ENCODE measurements at regions of chr11 and their contacts with region 1.

Region 1: DNA sequence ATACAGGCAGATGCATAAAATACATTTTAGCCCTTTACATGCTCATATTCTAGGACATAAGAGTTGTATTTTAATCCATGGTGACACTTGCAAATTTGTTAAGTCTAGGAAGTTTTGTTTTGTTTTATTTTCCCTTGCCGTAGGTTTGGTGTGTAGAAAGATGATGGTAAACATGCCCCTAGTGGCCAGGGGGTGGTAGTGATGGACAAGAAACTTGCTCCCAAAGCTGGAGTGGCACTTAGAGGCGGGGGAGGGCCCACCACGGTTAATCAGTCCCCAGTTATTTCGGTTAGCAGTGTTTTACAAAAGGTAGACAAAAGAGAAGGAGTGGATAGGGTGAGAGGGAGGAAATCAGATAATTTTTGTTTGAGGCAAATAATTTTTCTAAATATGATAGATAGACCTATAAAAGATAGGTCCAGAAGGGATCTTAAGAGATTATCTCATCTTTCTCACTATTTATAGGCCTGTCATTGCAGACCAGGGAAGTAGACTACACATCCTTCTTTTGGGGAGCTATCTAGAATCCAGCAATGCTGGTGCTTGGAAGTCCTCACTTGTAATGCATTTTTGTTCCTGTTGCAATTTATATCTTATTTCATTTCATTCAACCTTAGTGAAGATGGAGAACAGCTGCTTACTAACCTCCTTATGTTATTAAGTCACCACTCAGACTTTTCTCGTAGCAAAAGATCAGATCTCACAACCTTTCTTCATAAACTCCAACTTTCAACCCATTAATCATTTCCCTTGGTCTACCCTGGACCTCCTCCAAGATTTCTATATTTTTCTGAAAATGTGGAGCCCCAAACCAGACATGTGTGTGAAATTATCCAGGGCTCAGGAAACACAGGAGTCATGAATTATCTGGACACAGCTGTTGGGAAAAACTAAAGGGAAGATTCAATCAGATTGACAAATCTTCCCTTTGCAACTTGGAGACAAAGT is 5.9 kb upstream of the BDNF start:
- DNase-seq: no peak
- H3K4me3 ChIP-seq: no peak overlapping the region
- H3K27ac ChIP-seq: no peak overlapping the region
- H3K4me1 ChIP-seq: peaks cover 3 to 7% (median 4%) of the 10 kb centered on the region in 4 donors
- H3K27me3 ChIP-seq: peaks cover 34% of the 10 kb centered on the region
- CTCF ChIP-seq: peak; percentile 50 to 71 (median 61)
- EP300 ChIP-seq: no peak
- POLR2A ChIP-seq: no peak

Region 2: GRCh38 chr11:27464154-27464759 is 241.9 kb before region 1 on chr11:
- in situ Hi-C with region 1: no loop called
- intact Hi-C with region 1: no loop called
- DNase-seq: no peak
- H3K4me3 ChIP-seq: no peak overlapping the region
- H3K27ac ChIP-seq: peak overlapping the region; percentile 41 to 94 (median 78)
- H3K4me1 ChIP-seq: peaks cover 0 to 54% (median 41%) of the 10 kb centered on the region in 4 donors
- H3K27me3 ChIP-seq: no peaks in the 10 kb centered on the region
- CTCF ChIP-seq: no peak
- EP300 ChIP-seq: no peak
- POLR2A ChIP-seq: no peak

Region 3: DNA sequence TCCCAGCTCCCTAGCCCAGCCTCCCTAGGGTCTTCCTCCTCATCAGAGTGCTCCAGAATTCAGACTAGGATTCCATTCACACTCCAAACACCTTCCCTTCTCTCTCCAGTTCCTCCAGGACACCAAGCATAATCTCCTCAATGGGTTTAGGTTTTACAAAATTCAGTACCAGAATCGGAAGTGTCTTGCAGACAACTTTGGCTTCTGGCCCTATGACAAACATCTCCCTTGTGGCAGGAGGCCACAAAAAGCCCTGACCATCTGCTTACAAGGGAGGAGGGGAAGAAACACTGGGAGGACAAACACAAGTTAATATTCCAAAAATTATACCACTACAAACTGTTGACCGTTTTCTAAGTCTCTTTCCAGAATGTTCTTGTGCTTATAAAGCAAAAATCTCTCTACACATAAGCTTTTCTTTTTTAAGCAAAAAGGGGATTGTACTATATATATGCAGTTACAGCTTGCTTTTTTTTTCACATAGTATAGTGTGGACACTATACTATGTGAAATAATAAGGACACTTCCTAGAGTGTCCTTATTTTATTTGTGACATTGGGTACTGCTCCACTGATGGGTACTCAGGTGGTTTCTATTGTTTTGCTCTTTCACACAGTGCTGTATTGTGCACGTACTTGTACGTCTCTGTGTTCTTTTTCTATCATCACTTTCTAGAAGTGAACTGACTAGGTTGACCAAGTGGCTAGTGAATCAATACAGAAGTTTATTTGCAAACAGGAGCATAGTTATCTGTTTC is 84.6 kb before region 1 on chr11:
- in situ Hi-C with region 1: loop called in 1 of 4 experiments (anchors 25 kb)
- intact Hi-C with region 1: no loop called
- DNase-seq: no peak
- H3K4me3 ChIP-seq: no peak overlapping the region
- H3K27ac ChIP-seq: no peak overlapping the region
- H3K4me1 ChIP-seq: no peaks in the 10 kb centered on the region
- H3K27me3 ChIP-seq: no peaks in the 10 kb centered on the region
- CTCF ChIP-seq: no peak
- EP300 ChIP-seq: no peak
- POLR2A ChIP-seq: no peak

Region 4: DNA sequence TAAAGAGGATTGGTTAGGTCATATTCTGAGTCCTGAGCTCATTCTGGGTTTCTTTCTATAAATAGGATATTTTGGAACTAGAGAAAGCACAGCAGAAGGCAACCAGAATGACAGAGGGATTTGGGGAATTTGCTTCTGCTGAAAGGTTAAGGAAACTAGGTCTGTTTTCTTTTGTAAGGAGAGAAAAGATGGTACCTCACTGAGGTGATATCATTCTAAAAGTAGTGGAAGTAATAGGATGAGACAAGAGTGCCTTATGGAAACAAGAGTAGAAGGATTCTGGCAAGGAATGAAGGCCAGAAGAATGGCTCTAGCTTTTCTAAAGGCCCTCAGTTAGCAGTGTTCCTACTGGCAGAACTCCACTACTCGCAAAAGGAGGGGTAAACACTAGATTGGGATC is 20.8 kb after region 1 on chr11:
- in situ Hi-C with region 1: no loop called
- intact Hi-C with region 1: loop called (anchors 1 kb)
- DNase-seq: no peak
- H3K4me3 ChIP-seq: no peak overlapping the region
- H3K27ac ChIP-seq: no peak overlapping the region
- H3K4me1 ChIP-seq: peaks cover 4 to 10% (median 7%) of the 10 kb centered on the region in 4 donors
- H3K27me3 ChIP-seq: peaks cover 40% of the 10 kb centered on the region
- CTCF ChIP-seq: no peak
- EP300 ChIP-seq: no peak
- POLR2A ChIP-seq: no peak

Region 5: DNA sequence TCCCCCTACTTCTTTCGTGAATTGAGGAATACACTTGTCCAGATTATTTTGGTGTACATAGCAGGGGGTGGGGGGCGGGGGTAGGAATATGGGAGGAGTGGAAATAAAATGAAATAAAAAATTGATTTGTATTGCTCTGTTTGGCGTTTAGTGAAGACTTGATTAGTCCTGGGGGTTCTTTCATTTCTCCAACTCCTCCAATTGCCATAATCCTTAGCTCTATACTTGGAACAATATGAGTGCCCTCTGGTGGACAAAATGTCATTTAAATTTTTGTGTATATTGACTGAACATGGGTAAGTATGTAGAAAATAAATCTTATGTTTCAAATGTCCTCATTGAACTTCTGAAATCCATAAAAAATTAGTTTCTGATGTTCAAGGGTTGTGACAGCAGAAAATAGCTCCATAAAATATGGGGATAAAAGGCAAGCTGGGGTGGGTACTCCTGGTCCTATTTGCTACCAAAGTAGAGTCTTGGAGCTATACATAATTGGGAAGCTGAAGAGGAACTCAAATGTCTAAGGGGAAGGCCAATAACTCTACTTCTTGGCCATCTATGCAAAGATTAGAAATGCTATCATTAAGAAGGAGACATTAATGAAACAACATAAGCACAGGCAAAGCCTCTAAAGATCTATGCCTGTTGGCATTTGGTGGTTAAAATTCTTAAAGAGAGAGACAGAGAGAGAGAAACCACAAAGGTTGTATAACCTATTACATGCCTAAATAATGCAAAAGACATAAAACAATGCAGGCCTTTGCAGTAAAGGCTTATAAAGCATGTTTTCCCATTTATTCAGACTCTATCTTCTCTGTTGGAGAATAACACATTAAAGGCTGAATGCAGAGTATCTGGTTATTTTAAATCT is 823.6 kb after region 1 on chr11:
- in situ Hi-C with region 1: loop called in 2 of 4 experiments (anchors 25 kb)
- intact Hi-C with region 1: no loop called
- DNase-seq: no peak
- H3K4me3 ChIP-seq: no peak overlapping the region
- H3K27ac ChIP-seq: no peak overlapping the region
- H3K4me1 ChIP-seq: no peaks in the 10 kb centered on the region
- H3K27me3 ChIP-seq: no peaks in the 10 kb centered on the region
- CTCF ChIP-seq: peak; percentile 20 to 44 (median 39)
- EP300 ChIP-seq: no peak
- POLR2A ChIP-seq: no peak

Region 6: DNA sequence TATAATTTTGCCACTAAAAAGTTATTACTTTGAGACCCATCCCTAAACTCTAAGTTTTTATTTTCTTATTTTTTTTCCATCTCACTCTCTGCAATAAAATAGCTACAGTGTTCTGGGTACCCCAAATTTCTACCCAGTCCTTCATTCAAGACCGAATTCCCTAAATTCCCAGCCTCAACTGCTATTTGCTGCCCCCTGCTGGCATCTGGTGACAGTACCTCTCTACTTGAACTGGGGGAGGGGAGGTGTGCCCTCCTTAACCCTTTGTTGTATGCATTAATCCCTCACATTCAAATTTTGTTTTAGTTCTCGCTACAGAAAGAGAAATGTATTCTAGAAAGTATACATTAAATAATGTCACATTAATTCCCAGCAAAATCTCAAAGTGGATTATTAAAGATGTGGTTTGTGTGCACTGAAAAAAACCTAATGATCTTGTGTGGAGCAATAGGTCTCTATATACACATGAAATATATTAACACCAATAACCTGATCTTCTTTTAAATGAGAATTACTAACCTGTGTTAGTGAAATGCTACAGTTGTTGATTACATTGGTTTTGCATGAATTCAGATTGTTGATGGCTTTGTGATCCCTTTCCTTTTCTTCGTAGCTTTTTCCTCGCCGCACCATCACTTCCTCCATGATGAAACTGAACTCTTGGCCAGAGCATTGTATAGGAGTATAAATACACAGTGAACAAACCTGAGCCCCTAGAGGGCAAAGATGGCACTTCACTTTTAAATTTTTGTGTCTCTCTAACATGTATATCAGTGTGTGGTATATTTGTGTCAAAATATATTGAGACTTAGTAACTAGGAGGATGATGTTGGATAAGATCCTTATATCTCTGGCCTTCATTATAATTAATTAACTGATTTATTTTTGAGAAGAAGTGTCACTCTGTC is 992.0 kb after region 1 on chr11:
- in situ Hi-C with region 1: loop called in 2 of 4 experiments (anchors 25 kb)
- intact Hi-C with region 1: no loop called
- DNase-seq: peak; percentile 36
- H3K4me3 ChIP-seq: no peak overlapping the region
- H3K27ac ChIP-seq: no peak overlapping the region
- H3K4me1 ChIP-seq: no peaks in the 10 kb centered on the region
- H3K27me3 ChIP-seq: no peaks in the 10 kb centered on the region
- CTCF ChIP-seq: peak; percentile 50 to 70 (median 64)
- EP300 ChIP-seq: no peak
- POLR2A ChIP-seq: no peak

Measured in transverse colon (tissue), 4 donors.